HCT116 (cell line): ENCODE measurements at regions of chr6 and their contacts with region 1.

Region 1: DNA sequence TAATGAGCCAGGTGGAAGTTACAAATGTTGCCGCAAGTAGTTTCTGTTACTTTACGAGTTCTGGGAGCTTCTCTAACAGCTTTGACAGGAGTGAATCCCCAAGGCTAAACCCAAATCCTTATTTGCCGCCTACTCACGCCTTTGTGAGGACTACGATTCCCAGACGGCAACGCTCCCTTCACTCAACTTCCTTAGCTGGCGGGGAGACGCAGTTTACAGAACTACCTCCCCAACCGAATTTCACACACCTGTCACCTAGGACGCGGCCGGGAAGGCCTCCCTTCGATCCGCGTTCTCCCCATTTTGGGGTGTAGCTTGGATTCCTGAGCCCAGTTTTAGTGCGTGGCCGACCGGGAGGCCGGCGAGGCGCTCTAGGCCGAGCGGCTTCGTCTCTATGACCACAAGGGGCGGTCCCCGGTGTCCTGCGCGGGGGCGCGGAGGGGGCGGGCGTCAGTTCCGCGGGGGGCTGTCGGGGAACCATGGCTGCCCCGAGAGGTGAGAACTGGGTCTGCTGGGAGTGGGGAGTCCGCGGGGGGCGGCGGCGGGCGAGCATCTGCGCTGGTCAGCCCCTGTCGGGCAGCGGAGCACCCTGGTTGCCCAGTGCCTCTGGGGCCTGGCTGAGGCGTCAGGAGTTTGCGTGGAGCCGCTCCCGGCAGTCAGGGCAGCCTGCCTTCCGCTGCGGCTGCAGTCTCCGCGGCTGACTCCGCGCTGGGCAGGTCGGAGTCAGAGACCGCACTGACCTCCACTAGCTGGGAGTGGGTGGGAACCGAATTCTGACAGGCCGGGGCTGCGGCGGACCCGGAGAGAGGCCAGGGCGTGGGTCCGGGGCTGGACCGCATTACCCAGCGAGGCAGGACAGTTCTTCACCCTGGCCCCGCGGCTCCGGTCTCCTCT is at the start of gene SLC35A1:
- DNase-seq: peak; percentile 74
- ATAC-seq: peak; percentile 92
- H3K4me3 ChIP-seq: peak within 1 kb of the TSS; percentile 77 to 82
- H3K27ac ChIP-seq: peak within 1 kb of the TSS; percentile 77
- H3K4me1 ChIP-seq: peaks cover 14 to 38% of the 10 kb centered on the region in 2 experiments
- H3K27me3 ChIP-seq: no peaks in the 10 kb centered on the region
- CTCF ChIP-seq: no peak
- POLR2A ChIP-seq: no peak
- RAD21 ChIP-seq: no peak
- total RNA-seq, gene SLC35A1: 29.1 TPM

Region 2: GRCh38 chr6:87154993-87155841 is 317.6 kb before region 1 on chr6 and contains the start of gene ZNF292:
- CTCF ChIA-PET with region 1: no interaction called
- POLR2A ChIA-PET with region 1: no interaction called
- RAD21 ChIA-PET with region 1: no interaction called
- intact Hi-C with region 1: loop called (anchors 5 kb)
- DNase-seq: peak; percentile 94
- ATAC-seq: peak; percentile 94
- H3K4me3 ChIP-seq: peak within 1 kb of the TSS; percentile 89 to 91
- H3K27ac ChIP-seq: peak within 1 kb of the TSS; percentile 87
- H3K4me1 ChIP-seq: peaks cover 13 to 27% of the 10 kb centered on the region in 2 experiments
- H3K27me3 ChIP-seq: no peaks in the 10 kb centered on the region
- CTCF ChIP-seq: no peak
- POLR2A ChIP-seq: no peak
- RAD21 ChIP-seq: no peak
- total RNA-seq, gene ZNF292: 35.3 TPM

Region 3: DNA sequence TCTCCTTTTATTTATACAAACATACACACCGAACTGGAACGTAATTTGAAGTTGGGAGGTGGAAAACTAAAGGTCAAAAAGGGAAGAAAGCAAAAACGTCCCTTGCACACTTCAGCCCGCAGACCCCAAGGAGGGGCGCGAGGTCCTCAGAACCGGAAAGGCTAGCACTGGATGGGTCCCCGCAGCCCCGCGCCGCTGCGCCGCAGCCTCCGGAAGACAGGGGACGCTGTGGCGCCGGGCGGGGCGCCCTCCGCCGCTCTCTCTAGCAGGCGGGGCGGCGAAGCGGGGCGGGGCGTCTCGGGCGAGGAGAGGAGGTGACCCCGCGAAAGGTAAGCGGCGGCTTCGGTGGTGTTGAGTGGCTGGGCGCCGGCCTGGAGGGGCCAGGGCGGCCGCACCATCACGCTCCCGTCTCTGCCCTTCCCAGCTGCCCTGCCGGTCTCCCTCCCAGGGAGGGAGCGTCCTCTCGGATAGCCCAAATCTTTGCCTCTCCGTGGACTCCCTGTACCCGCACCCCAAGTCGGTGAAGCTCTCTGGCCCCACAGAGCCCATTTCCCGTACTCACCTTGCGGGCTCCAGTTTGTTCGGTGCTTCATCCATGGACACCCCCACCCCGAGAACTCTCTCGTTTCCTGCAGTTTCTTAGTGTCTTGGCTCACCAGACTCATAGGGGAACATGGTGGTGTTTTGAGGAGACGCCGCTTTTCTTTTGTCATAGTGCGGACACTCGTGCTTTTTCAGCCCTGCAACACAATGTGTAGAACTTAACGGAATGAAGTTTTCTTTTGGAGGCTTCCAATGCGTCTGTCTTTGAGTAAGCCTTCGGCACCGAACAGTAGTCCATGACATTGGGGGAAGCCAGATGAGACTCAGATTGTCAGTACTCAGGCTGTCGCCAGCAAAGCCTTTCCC is 150.2 kb before region 1 on chr6 and contains the start of gene SMIM8:
- CTCF ChIA-PET with region 1: no interaction called
- POLR2A ChIA-PET with region 1: no interaction called
- RAD21 ChIA-PET with region 1: no interaction called
- intact Hi-C with region 1: loop called (anchors 1 kb)
- DNase-seq: peak; percentile 53
- ATAC-seq: peak; percentile 99
- H3K4me3 ChIP-seq: peak within 1 kb of the TSS; percentile 99
- H3K27ac ChIP-seq: peak within 1 kb of the TSS; percentile 49
- H3K4me1 ChIP-seq: peaks cover 0 to 4% of the 10 kb centered on the region in 2 experiments; a peak in 1 of 4 replicates
- H3K27me3 ChIP-seq: no peaks in the 10 kb centered on the region
- CTCF ChIP-seq: peak; percentile 76 to 100 (median 98)
- POLR2A ChIP-seq: peak; percentile 52
- RAD21 ChIP-seq: no peak; the same call in 1 of the 2 replicates
- total RNA-seq, gene SMIM8: 8.0 TPM

Region 4: DNA sequence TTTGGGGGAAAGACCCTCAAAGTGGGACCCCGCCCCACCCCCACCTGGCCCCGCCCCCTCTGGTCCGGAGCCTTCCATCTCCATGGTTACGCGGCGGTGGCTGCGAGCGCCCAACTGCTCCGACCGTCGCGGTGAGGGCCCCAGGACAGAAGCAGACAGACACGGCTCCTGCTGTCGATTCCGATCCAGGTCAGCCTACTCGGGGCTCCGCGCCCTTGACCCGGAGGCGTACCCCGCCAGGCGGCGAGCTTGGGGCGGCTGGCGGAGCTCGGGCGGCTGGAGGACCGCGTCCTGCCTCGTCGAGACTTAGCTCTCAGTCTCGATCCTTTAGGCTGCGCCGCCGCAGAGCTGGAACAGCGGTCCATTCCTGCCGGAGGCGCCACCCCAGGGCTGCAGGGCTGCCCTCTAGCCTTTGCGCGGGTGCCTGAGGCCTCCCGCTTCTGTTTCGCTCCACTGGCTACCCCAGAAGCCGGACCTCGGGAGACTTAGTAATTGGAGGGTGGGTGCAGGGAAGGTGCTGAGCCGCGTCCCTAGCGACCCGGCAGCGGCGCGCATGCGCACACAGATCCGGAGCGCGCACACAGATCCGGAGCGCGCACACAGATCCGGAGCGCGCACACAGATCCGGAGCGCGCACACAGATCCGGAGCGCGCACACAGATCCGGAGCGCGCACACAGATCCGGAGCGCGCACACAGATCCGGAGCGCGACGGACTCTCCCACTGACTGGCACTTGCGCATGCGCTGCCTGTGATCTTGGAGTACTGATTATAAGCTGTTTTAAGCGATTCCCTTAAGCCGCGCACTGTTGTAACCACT is 64.7 kb before region 1 on chr6 and contains the start of gene CFAP206:
- CTCF ChIA-PET with region 1: no interaction called
- POLR2A ChIA-PET with region 1: no interaction called
- RAD21 ChIA-PET with region 1: no interaction called
- intact Hi-C with region 1: loop called (anchors 5 kb)
- DNase-seq: peak; percentile 73
- ATAC-seq: peak; percentile 87
- H3K4me3 ChIP-seq: peak within 1 kb of the TSS; percentile 67 to 79
- H3K27ac ChIP-seq: peak within 1 kb of the TSS; percentile 85
- H3K4me1 ChIP-seq: peaks cover 4 to 12% of the 10 kb centered on the region in 2 experiments; a peak in 3 of 4 replicates
- H3K27me3 ChIP-seq: no peaks in the 10 kb centered on the region
- CTCF ChIP-seq: no peak
- POLR2A ChIP-seq: no peak
- RAD21 ChIP-seq: no peak; the same call in 1 of the 2 replicates
- total RNA-seq, gene CFAP206: 0.54 TPM

Region 5: DNA sequence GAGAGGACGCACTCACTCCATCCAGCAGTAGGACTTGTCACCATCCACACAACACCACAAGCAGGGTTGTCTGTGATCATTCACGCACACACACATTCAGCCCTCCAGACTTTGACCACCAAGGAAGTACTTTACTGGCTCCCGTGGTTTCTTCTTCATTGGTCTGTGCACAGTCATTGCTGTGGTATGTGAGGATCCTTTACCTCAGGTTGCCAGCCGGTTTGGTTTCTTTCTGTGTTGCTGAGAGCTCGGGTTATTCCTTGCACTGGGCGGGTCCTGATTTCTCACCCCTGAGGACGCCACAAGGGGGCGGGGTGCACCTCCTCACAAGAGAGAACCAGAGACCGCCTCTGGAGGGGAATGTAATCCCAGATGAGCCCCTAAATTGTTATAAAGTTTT is 11.2 kb after region 1 on chr6:
- CTCF ChIA-PET with region 1: no interaction called
- POLR2A ChIA-PET with region 1: no interaction called
- RAD21 ChIA-PET with region 1: no interaction called
- intact Hi-C with region 1: loop called (anchors 1 kb)
- DNase-seq: peak; percentile 95
- ATAC-seq: peak; percentile 94
- H3K4me3 ChIP-seq: peak overlapping the region; percentile 32 to 56
- H3K27ac ChIP-seq: peak overlapping the region; percentile 90
- H3K4me1 ChIP-seq: peaks cover 31 to 57% of the 10 kb centered on the region in 2 experiments
- H3K27me3 ChIP-seq: no peaks in the 10 kb centered on the region
- CTCF ChIP-seq: peak in 2 of 3 experiments; percentile 54 to 61; a peak in 4 of 6 replicates
- POLR2A ChIP-seq: no peak
- RAD21 ChIP-seq: peak; percentile 68

Region 6: GRCh38 chr6:87682310-87682709 is 209.5 kb after region 1 on chr6:
- CTCF ChIA-PET with region 1: no interaction called
- POLR2A ChIA-PET with region 1: no interaction called
- RAD21 ChIA-PET with region 1: no interaction called
- intact Hi-C with region 1: no loop called
- DNase-seq: no peak
- ATAC-seq: no peak
- H3K4me3 ChIP-seq: no peak overlapping the region
- H3K27ac ChIP-seq: no peak overlapping the region
- H3K4me1 ChIP-seq: no peaks in the 10 kb centered on the region
- H3K27me3 ChIP-seq: no peaks in the 10 kb centered on the region
- CTCF ChIP-seq: no peak
- POLR2A ChIP-seq: no peak
- RAD21 ChIP-seq: no peak

Region 7: DNA sequence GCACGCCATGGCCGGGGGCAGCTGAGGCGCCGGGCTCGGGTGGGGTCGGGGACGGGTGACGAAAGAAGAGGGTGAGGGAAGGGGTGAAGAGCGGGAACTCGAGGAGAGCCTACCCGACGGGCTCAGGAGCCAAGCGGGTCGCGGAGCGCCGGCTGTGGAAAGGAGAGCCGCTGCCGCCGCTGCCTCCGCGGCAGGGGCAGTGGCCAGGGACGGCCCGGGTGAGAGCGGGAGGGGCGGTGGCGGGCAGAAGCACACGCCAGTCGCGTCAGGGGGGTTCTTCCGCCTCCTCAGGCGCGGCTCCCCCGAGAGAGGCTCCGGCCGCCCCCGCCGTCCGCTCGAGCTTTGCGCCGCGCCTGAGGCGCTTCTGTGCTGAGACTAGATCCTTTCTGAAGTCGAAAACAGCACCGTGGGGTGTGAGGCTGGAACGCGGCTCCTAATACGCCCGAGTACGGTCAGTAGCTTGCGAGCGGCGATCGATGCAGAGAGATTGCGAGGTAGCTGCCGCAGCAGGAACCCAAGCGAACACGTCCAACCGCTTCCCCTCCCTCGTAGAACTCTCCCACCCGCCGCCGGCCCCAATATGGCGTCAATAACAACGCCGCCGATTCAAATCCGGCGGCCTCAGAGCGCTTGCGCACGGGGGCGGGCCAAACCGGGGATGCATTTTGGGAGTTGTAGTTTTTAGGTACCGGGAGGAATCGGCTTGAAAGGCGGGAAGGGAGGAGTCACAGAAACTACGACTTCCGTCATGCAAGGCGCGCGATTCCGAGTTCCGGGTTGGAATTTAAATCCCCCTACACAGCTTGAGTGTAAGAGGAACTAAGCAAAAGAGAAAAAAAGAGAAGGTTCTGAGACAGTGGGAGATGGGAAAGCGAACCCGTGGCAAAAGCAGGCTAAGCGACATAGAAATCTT is 229.2 kb after region 1 on chr6 and contains the start of gene AKIRIN2:
- CTCF ChIA-PET with region 1: no interaction called
- POLR2A ChIA-PET with region 1: no interaction called
- RAD21 ChIA-PET with region 1: no interaction called
- intact Hi-C with region 1: loop called (anchors 2 kb)
- DNase-seq: peak; percentile 98
- ATAC-seq: peak; percentile 89
- H3K4me3 ChIP-seq: peak within 1 kb of the TSS; percentile 78 to 91
- H3K27ac ChIP-seq: peak within 1 kb of the TSS; percentile 95
- H3K4me1 ChIP-seq: peaks cover 12 to 42% of the 10 kb centered on the region in 2 experiments
- H3K27me3 ChIP-seq: no peaks in the 10 kb centered on the region
- CTCF ChIP-seq: no peak
- POLR2A ChIP-seq: peak; percentile 84
- RAD21 ChIP-seq: no peak
- total RNA-seq, gene AKIRIN2: 54.8 TPM